Activated CD4-positive, alpha-beta memory T cell treated with anti-CD3 and anti-CD28 coated beads, Interleukin-2, amount 10 ng/mL, durations not matched to agents 7 days and 5 days (primary cell): ENCODE measurements at regions of chr3 and their contacts with region 1.

Region 1: DNA sequence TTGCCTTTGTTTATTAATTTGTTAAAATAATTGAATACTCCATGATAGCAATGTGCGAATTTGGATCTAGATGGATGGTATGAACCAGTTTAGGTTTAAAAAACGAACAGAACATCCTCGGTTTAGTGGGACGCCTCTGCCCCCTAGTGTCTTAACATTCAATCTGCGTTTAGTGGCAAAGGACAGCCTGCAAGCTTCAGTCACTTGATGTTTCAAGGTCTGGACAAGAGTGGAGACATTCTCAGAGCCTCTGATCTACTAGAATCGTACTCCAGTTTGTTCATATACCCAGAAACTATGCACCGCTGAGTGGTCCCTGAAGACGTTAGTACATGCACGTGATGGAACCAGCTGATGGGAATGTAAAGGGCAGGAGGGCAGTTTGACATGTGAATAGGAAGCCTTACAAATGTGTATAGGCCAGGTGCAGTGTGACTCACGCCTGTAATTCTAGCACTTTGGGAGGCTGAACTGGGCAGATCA is 17.8 kb upstream of the ATP13A4 start:
- DNase-seq: peak; percentile 54
- H3K4me3 Mint-ChIP-seq: no peak overlapping the region
- H3K27ac Mint-ChIP-seq: no peak overlapping the region
- H3K4me1 Mint-ChIP-seq: peaks cover 3% of the 10 kb centered on the region
- H3K27me3 Mint-ChIP-seq: no peaks in the 10 kb centered on the region

Region 2: GRCh38 chr3:193465992-193466608 is 106.4 kb before region 1 on chr3:
- CTCF ChIA-PET with region 1: interaction called, 25 read pairs
- POLR2A ChIA-PET with region 1: no interaction called
- DNase-seq: no peak
- H3K4me3 Mint-ChIP-seq: no peak overlapping the region
- H3K27ac Mint-ChIP-seq: no peak overlapping the region
- H3K4me1 Mint-ChIP-seq: peaks cover 4% of the 10 kb centered on the region
- H3K27me3 Mint-ChIP-seq: no peaks in the 10 kb centered on the region